ENCODE measurements at regions of chr2 and their contacts with region 1.

Region 1: DNA sequence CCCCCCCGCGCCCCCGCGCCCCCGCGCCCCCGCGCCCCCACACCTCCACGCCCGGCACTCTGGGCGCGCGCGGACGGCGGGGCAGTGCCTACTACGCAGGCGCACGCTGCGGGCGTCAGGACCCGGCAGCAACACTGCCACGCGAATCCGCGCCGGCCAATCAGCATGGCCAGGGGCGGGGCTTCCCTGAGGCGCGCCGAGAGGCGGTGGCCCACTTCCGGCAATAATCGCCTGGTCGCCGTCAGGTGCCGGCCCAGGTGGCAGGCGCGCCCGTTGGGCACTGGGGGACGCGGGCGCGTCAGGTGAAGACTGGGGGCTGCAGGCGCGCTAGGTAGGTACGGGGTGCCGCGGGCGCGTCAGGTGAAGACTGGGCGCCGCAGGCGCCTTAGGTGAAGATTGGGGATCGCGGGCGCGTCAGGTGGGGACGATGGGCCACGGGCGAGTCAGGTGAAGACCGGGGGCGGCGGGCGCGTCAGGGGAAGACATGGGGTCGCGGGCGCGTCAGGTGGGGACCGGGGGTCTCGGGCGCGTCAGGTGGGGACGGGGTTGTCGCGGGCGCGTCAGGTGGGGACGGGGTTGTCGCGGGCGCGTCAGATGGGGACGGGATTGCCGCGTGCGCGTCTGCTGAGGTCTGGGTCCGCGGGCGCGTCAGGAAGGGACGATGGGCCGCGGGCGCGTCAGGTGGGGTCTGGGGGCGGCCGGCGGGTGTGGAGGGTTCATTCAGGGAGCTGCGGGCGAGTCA is 219.1 kb downstream of the RTP5 start:
- DNase-seq: peak; percentile 89
- ATAC-seq: peak; percentile 93
- H3K4me3 ChIP-seq: peak overlapping the region; percentile 77 to 97 (median 91); a peak in 5 of 6 replicates
- H3K27ac ChIP-seq: peak overlapping the region; percentile 50
- H3K4me1 ChIP-seq: peaks cover 50% of the 10 kb centered on the region
- H3K27me3 ChIP-seq: no peaks in the 10 kb centered on the region
- CTCF ChIP-seq: no peak
- EP300 ChIP-seq: no peak
- POLR2A ChIP-seq: peak; percentile 51 to 52; a peak in 2 of 4 replicates
- RAD21 ChIP-seq: peak; percentile 28; the same call in 1 of the 2 replicates

Region 2: GRCh38 chr2:241788572-241788971 is 300.1 kb before region 1 on chr2:
- CTCF ChIA-PET with region 1: no interaction called
- POLR2A ChIA-PET with region 1: no interaction called
- in situ Hi-C with region 1: no loop called
- intact Hi-C with region 1: no loop called
- DNase-seq: no peak
- ATAC-seq: no peak
- H3K4me3 ChIP-seq: no peak overlapping the region
- H3K27ac ChIP-seq: no peak overlapping the region
- H3K4me1 ChIP-seq: peaks cover 25% of the 10 kb centered on the region
- H3K27me3 ChIP-seq: no peaks in the 10 kb centered on the region
- CTCF ChIP-seq: peak; percentile 33
- EP300 ChIP-seq: no peak
- POLR2A ChIP-seq: no peak
- RAD21 ChIP-seq: no peak

Region 3: GRCh38 chr2:242020196-242021004 is 68.2 kb before region 1 on chr2:
- CTCF ChIA-PET with region 1: no interaction called
- POLR2A ChIA-PET with region 1: no interaction called
- in situ Hi-C with region 1: no loop called
- intact Hi-C with region 1: loop called (anchors 5 kb)
- DNase-seq: peak; percentile 63
- ATAC-seq: peak; percentile 85
- H3K4me3 ChIP-seq: peak overlapping the region in 1 of 3 experiments; percentile 45; a peak in 1 of 6 replicates
- H3K27ac ChIP-seq: no peak overlapping the region
- H3K4me1 ChIP-seq: peaks cover 41% of the 10 kb centered on the region
- H3K27me3 ChIP-seq: peaks cover 3 to 67% of the 10 kb centered on the region in 2 experiments; a peak in 4 of 5 replicates
- CTCF ChIP-seq: peak; percentile 98
- EP300 ChIP-seq: no peak
- POLR2A ChIP-seq: no peak
- RAD21 ChIP-seq: peak; percentile 91

Region 4: GRCh38 chr2:242034996-242035814 is 53.4 kb before region 1 on chr2:
- CTCF ChIA-PET with region 1: no interaction called
- POLR2A ChIA-PET with region 1: no interaction called
- in situ Hi-C with region 1: no loop called
- intact Hi-C with region 1: loop called (anchors 5 kb)
- DNase-seq: no peak
- ATAC-seq: peak; percentile 31
- H3K4me3 ChIP-seq: peak overlapping the region in 1 of 3 experiments; percentile 22; a peak in 1 of 6 replicates
- H3K27ac ChIP-seq: no peak overlapping the region
- H3K4me1 ChIP-seq: peaks cover 60% of the 10 kb centered on the region
- H3K27me3 ChIP-seq: peaks cover 16 to 68% of the 10 kb centered on the region in 2 experiments
- CTCF ChIP-seq: no peak
- EP300 ChIP-seq: no peak
- POLR2A ChIP-seq: no peak
- RAD21 ChIP-seq: no peak

Measured in HepG2 (cell line).